Activated CD8-positive, alpha-beta T cell treated with anti-CD3 and anti-CD28 coated beads for 36 hours (primary cell): ENCODE measurements at regions of chr5 and their contacts with region 1.

Region 1: DNA sequence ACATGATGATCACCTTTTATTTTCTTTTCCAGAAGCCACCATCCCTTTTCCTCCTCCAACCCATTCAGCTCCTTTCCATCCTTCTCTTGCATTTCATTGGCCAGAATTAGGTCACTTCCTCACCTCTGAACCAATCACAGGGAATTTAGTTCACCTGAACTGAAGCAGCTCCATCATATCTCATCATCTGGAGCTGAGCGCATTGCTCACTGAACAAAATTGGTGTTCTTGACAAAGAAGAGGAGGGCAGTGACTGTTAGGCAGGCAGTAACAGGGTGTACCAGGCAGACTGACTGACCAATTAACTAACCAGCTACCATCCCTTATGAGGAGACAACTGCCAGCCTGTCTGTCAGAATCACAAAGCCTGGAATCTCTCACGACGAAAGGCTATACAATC is 1.8 kb upstream of the ZNF354A start:
- DNase-seq: no peak
- ATAC-seq: no peak
- H3K4me3 Mint-ChIP-seq: no peak overlapping the region
- H3K27ac Mint-ChIP-seq: no peak overlapping the region
- H3K4me1 Mint-ChIP-seq: peaks cover 7% of the 10 kb centered on the region
- H3K27me3 Mint-ChIP-seq: no peaks in the 10 kb centered on the region
- CTCF ChIP-seq: no peak

Region 2: DNA sequence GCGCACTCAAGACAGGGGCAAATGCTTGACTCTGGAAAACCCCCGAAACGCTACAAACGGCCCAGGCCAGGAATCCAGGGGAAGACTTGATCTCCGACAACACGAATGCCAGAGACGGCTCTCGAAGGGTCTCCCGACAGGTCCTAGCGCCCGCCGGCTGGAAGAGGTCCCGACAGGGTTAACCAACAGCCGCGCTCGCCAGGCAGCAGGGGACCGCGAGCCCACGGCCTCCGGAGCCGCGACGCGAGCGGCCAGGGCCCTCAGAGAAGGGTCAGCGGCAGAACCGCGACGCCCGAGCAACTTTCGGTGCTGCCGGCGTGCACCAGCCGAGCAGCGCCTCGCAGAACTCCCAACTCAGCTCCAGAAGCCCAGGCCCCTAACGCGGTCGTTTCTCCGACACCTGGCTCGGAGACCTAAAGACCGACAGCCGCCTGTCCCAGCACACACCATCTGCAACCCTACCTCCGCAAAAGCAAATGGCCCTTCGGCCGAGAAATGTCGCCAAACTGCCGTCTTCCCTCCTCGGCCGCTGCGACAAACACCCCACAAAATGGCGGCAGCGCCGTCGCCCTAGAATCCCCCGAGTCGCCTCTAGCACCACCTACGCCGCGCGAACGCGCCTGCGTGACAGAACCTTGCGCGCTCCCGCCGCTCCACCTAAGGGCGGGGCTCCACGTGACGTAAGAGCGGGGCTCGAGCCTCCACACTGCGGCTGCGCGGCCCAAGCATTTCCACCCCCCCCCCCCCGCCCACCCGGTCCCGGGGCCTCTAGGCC is 105.6 kb before region 1 on chr5 and contains the start of gene CLK4:
- CTCF ChIA-PET with region 1: interaction called, 10 read pairs
- POLR2A ChIA-PET with region 1: interaction called, 3 read pairs
- intact Hi-C with region 1: loop called (anchors 10 kb)
- DNase-seq: peak; percentile 97
- ATAC-seq: peak; percentile 84
- H3K4me3 Mint-ChIP-seq: peak within 1 kb of the TSS; percentile 90
- H3K27ac Mint-ChIP-seq: peak within 1 kb of the TSS; percentile 98
- H3K4me1 Mint-ChIP-seq: peaks cover 32% of the 10 kb centered on the region
- H3K27me3 Mint-ChIP-seq: no peaks in the 10 kb centered on the region
- CTCF ChIP-seq: no peak
- total RNA-seq, gene CLK4: 21.1 to 24.2 TPM

Region 3: DNA sequence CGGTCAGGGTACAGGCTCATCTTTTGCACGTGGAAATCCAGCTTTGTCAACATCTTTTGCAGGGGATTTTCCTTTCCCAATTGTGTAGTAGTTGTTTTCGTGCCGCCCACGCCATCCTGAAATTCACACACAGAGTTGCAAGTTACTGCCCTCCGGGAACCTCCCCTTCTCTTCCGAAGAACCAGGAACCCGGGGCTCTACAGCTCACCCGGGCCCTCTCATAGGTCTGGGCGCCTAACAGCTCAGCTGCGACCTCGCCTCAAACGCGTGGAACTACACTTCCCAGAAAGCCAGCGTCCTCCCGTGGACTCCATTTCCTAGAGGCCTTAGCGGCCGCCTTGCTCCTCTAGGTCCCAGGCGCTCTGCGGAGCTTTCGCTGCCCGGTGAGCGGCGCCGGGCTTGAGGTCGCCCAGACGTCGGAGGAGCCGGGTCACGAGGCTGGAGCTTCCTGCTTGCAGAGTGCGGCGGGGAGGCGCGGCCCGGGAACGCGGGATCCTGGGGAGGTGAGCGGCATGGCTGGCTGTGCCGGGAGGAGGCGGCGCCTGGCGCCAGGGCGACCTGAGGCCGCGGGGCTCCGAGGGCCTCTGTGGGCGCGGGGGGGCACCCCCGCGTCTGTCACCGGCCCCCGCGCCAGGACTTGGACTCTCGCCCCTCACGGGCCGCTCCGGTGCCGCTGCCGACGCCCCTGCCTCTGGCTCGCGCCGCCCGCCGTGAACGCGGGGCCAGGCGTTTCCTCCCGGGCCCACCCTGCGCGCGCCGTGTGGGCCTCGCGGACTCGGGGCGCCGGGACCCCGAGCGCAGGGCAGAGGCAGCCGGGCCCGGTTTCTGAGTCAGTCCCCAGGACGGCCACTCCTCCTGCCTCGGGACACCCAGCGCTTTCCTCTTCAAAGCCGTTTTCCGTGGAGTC is 127.6 kb after region 1 on chr5 and contains the start of gene ZNF354B:
- CTCF ChIA-PET with region 1: interaction called, 12 read pairs
- POLR2A ChIA-PET with region 1: no interaction called
- intact Hi-C with region 1: loop called (anchors 5 kb)
- DNase-seq: peak; percentile 91
- ATAC-seq: peak; percentile 99
- H3K4me3 Mint-ChIP-seq: peak within 1 kb of the TSS; percentile 85
- H3K27ac Mint-ChIP-seq: peak within 1 kb of the TSS; percentile 83
- H3K4me1 Mint-ChIP-seq: peaks cover 29% of the 10 kb centered on the region
- H3K27me3 Mint-ChIP-seq: no peaks in the 10 kb centered on the region
- CTCF ChIP-seq: peak; percentile 13
- total RNA-seq, gene ZNF354B: 7.1 to 8.4 TPM